Activated T-helper 1 cell treated with anti-CD3 and anti-CD28 coated beads, Interleukin-12 subunit alpha, Interleukin-12 subunit beta, Interleukin-2, Interleukin-4 antibody, amounts not matched to agents 30 ng/mL and 10 ng/mL and 1 ng/mL, durations not matched to agents 14 hours and 24 hours and 36 hours (primary cell): ENCODE measurements at regions of chr5 and their contacts with region 1.

Region 1: GRCh38 chr5:170278611-170279452 is 18.7 kb downstream of the LCP2 start:
- DNase-seq: peak; percentile 88
- H3K4me3 Mint-ChIP-seq: peak overlapping the region; percentile 73
- H3K27ac Mint-ChIP-seq: peak overlapping the region; percentile 98
- H3K4me1 Mint-ChIP-seq: peaks cover 96% of the 10 kb centered on the region
- H3K27me3 Mint-ChIP-seq: no peaks in the 10 kb centered on the region

Region 2: GRCh38 chr5:170253844-170254455 is 24.9 kb before region 1 on chr5:
- intact Hi-C with region 1: loop called (anchors 1 kb)
- DNase-seq: peak; percentile 68
- H3K4me3 Mint-ChIP-seq: peak overlapping the region; percentile 13
- H3K27ac Mint-ChIP-seq: peak overlapping the region; percentile 66
- H3K4me1 Mint-ChIP-seq: peaks cover 62% of the 10 kb centered on the region
- H3K27me3 Mint-ChIP-seq: no peaks in the 10 kb centered on the region

Region 3: DNA sequence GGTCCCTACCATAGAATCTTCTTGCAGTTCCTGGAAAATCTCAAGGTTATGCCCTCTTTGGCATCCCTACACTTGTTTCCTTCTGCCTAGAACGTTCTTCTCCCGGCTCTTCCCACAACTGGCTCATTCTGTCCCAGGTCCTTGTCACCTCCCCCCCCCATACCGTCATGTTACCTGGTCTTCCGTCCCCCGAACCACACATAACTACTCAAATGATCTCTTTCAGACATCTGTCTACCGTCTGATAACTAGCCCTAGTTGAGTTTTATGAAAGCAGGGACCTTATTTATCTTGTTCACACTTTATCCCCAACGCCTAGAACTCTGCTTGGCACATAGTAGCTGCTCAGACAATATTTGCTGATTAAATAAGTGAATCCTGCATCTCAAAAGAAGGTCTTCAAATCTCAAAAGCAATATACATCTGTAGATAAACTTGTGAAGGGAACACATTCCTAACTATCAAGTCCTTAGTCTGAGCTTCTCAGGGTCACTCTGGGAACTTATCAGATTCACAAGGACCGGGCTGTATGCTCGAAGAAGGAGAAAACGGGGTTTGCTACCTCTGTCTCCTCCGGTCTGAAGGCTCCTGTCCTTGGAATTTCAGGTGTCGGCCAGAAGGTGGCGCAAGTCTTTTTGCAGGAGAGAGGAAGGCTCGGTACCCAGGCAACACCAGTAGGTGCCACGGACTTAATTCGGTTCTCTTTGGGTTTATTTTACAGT is 11.2 kb before region 1 on chr5:
- intact Hi-C with region 1: loop called (anchors 1 kb)
- DNase-seq: peak; percentile 66
- H3K4me3 Mint-ChIP-seq: peak overlapping the region; percentile 77
- H3K27ac Mint-ChIP-seq: peak overlapping the region; percentile 90
- H3K4me1 Mint-ChIP-seq: peaks cover 91% of the 10 kb centered on the region
- H3K27me3 Mint-ChIP-seq: no peaks in the 10 kb centered on the region

Region 4: DNA sequence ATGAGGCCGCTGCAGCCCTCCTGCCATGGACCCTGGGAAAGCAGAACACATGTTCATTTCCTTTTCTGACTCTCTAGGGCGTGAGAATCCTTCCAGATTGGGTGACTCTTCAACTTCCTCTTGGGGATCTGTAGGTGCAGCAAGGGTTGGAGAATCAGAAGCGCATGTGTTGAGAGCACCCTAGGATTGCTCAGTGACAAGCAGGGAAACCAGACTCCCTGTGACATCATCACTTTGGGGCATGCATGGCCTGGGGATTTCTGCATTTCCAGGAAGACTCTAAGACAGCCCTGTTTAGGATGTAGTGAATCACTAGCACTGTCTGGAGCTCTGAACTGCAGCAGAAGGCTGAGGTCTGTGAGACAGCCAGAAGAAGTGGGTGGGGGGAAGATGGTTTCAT is 33.8 kb after region 1 on chr5:
- intact Hi-C with region 1: loop called (anchors 1 kb)
- DNase-seq: peak; percentile 61
- H3K4me3 Mint-ChIP-seq: peak overlapping the region; percentile 80
- H3K27ac Mint-ChIP-seq: peak overlapping the region; percentile 91
- H3K4me1 Mint-ChIP-seq: peaks cover 54% of the 10 kb centered on the region
- H3K27me3 Mint-ChIP-seq: no peaks in the 10 kb centered on the region

Region 5: DNA sequence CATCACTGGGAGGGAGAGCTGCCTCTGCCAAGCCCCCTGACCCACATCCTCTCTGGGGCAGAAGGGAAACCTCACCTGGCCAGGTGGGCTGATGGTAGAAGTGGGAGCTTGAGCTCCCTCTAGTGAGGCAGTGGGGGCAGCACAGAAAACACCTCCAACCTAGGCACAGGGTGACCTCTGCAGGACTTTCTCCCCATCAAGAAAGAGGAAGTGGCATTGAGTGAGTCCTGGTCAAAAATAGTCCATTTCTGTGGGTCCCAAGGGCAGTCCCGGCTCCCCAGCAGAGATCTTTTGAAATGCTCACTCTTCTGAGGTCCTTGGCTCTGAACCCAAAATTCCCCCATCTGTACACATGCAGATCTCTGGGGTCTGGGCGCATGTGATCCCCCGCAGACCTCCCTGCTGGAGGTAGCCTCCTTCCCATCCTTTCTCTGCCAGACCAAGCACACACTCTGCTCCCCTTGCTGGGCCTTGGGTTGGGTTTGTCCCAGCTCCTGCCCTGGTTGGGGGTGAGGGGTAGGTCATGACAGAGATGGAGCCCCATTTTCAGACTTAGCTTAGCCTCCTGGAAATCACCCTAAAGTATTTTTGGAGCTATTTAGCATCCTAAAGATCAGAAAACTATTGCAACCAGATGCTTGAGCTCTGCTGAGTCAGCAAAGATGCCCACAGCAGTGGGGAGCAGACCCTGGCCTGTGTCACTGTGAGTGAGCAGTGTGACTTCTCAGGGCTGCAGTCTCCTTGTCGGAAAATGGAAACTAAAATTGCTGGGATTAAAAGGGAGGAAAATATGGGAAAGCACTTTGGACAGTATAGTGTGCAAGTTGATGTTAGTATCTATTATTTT is 60.3 kb after region 1 on chr5:
- intact Hi-C with region 1: loop called (anchors 1 kb)
- DNase-seq: peak; percentile 45
- H3K4me3 Mint-ChIP-seq: no peak overlapping the region
- H3K27ac Mint-ChIP-seq: peak overlapping the region; percentile 63
- H3K4me1 Mint-ChIP-seq: peaks cover 20% of the 10 kb centered on the region
- H3K27me3 Mint-ChIP-seq: peaks cover 4% of the 10 kb centered on the region

Region 6: DNA sequence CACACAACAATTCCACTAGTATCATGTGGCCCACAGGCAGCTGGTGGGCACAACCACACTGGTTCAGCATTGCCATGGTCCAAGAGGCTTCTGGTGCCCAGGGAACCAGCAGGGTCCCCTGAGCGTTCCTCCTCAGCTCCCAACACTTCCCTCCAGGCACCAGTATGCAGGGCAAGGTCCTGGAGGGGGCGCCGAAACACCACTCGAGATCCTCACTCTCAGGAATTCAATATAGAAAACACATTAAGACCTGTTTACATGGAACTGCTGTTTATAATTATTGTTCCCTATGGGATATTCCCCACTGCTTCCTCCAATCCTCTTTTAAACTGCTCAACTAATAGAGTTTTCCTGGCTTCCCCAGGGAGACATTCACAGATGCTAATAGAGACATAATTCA is 412.8 kb after region 1 on chr5:
- intact Hi-C with region 1: no loop called
- DNase-seq: no peak
- H3K4me3 Mint-ChIP-seq: no peak overlapping the region
- H3K27ac Mint-ChIP-seq: no peak overlapping the region
- H3K4me1 Mint-ChIP-seq: no peaks in the 10 kb centered on the region
- H3K27me3 Mint-ChIP-seq: peaks cover 31% of the 10 kb centered on the region